Activated naive CD8-positive, alpha-beta T cell treated with anti-CD3 and anti-CD28 coated beads, Interleukin-2, amount 10 ng/mL, durations not matched to agents 7 days and 5 days (primary cell): ENCODE measurements at regions of chr3 and their contacts with region 1.

Region 1: GRCh38 chr3:120742198-120742849 is at the starts of genes GTF2E1 and RABL3:
- DNase-seq: peak; percentile 89
- ATAC-seq: peak; percentile 99
- H3K4me3 Mint-ChIP-seq: peak within 1 kb of the TSS; percentile 85
- H3K27ac Mint-ChIP-seq: peak within 1 kb of the TSS; percentile 90
- H3K4me1 Mint-ChIP-seq: peaks cover 23% of the 10 kb centered on the region
- H3K27me3 Mint-ChIP-seq: no peaks in the 10 kb centered on the region
- total RNA-seq, gene GTF2E1: 29.0 to 29.2 TPM
- total RNA-seq, gene RABL3: 21.1 to 22.3 TPM

Region 2: DNA sequence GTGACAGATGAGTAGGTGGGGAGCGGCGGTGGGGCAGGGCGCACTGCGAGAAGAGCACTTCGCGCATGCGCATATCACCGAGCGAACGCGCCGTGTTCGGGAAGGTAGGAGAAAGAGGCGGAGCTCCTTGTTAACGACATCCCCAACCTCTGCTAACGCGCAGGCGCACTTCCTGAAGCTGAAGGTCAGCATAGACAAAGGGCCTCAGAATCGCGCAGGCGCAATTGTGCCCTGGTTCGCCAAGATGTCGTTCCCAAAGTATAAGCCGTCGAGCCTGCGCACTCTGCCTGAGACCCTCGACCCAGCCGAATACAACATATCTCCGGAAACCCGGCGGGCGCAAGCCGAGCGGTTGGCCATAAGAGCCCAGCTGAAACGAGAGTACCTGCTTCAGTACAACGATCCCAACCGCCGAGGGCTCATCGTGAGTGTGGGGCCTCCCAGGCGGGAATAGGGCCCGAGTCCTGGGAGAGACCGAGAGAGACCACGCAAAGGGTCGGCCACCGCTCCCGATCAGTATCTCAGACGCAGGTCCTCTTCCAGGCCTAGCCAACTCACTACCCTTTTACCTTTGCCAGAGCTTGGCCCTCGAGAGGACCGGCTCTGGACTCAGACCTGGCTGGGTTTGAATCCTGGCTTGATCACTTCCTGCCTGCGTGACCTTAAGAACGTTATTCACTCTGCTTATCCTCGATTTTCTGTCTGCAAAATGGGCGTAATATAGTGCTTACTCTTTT is 146.0 kb before region 1 on chr3 and contains the start of gene NDUFB4:
- POLR2A ChIA-PET with region 1: interaction called, 27 read pairs
- DNase-seq: peak; percentile 90
- ATAC-seq: peak; percentile 99
- H3K4me3 Mint-ChIP-seq: peak within 1 kb of the TSS; percentile 93
- H3K27ac Mint-ChIP-seq: peak within 1 kb of the TSS; percentile 92
- H3K4me1 Mint-ChIP-seq: peaks cover 12% of the 10 kb centered on the region
- H3K27me3 Mint-ChIP-seq: peaks cover 6% of the 10 kb centered on the region
- total RNA-seq, gene NDUFB4: 120 to 121 TPM